Naive thymus-derived CD4-positive, alpha-beta T cell (primary cell): ENCODE measurements at regions of chr6 and their contacts with region 1.

Region 1: DNA sequence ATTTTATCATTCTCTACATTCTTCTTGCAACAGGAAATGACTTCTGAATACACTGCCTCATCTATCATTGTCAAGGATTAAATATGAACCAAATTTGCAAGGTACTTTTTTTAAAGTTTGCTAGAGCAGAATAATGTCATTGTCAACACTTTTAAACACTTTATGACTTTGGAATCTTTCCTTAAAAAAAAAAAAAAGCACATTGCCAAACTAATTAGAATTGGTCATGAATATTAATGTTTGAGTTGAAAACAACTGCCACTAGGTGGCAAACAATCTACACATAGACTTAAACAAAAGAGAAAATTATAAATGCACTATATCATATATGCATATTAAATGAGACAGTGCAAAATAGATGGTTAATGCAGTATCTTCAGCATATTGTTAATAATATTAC is 32.5 kb upstream of the TMEM244 start:
- DNase-seq: peak in 4 of 9 donors; percentile 2 to 13 (median 8)
- ATAC-seq: peak; percentile 54
- H3K4me3 ChIP-seq: no peak overlapping the region
- H3K4me3 Mint-ChIP-seq: no peak overlapping the region
- H3K27ac ChIP-seq: no peak overlapping the region
- H3K27ac Mint-ChIP-seq: no peak overlapping the region
- H3K4me1 ChIP-seq: no peaks in the 10 kb centered on the region
- H3K4me1 Mint-ChIP-seq: peaks cover 0 to 5% (median 0%) of the 10 kb centered on the region in 7 donors
- H3K27me3 ChIP-seq: no peaks in the 10 kb centered on the region
- H3K27me3 Mint-ChIP-seq: peaks cover 0 to 14% (median 5%) of the 10 kb centered on the region in 5 donors

Region 2: DNA sequence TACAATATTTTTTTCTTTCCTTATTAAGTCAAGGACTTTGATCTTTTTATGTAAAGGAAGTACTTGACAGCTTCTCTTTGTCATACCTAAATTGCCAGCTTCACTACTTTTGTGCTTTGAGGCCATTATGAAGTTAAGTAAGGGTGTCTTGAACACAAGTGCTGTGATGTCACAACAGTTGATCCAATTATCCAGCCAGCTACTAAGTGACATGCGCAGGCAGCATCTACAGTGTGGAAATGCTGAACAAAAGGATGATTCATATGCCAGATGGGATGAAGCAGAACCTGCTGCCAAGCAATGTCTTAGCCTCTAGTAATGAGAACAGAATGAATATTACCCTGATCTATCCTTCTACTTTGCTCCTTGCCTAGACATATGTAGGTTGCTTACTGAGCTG is 35.8 kb after region 1 on chr6:
- CTCF ChIA-PET with region 1: no interaction called
- POLR2A ChIA-PET with region 1: no interaction called
- intact Hi-C with region 1: loop called in 1 of 2 experiments (anchors 1 kb)
- DNase-seq: no peak
- ATAC-seq: no peak
- H3K4me3 ChIP-seq: no peak overlapping the region
- H3K4me3 Mint-ChIP-seq: no peak overlapping the region
- H3K27ac ChIP-seq: no peak overlapping the region
- H3K27ac Mint-ChIP-seq: no peak overlapping the region
- H3K4me1 ChIP-seq: no peaks in the 10 kb centered on the region
- H3K4me1 Mint-ChIP-seq: peaks cover 0 to 5% (median 0%) of the 10 kb centered on the region in 7 donors
- H3K27me3 ChIP-seq: no peaks in the 10 kb centered on the region
- H3K27me3 Mint-ChIP-seq: peaks cover 0 to 14% (median 5%) of the 10 kb centered on the region in 5 donors